Stomach (tissue), 19 donors: ENCODE measurements at regions of chr18 and their contacts with region 1.

Region 1: GRCh38 chr18:9153256-9153655 is 16.7 kb downstream of the ANKRD12 start:
- DNase-seq: no peak
- H3K4me3 ChIP-seq: no peak overlapping the region
- H3K27ac ChIP-seq: peak overlapping the region in 1 of 5 donors; percentile 4
- H3K4me1 ChIP-seq: peaks cover 19 to 76% (median 51%) of the 10 kb centered on the region in 4 donors
- H3K27me3 ChIP-seq: no peaks in the 10 kb centered on the region
- CTCF ChIP-seq: no peak
- EP300 ChIP-seq: no peak
- POLR2A ChIP-seq: no peak

Region 2: DNA sequence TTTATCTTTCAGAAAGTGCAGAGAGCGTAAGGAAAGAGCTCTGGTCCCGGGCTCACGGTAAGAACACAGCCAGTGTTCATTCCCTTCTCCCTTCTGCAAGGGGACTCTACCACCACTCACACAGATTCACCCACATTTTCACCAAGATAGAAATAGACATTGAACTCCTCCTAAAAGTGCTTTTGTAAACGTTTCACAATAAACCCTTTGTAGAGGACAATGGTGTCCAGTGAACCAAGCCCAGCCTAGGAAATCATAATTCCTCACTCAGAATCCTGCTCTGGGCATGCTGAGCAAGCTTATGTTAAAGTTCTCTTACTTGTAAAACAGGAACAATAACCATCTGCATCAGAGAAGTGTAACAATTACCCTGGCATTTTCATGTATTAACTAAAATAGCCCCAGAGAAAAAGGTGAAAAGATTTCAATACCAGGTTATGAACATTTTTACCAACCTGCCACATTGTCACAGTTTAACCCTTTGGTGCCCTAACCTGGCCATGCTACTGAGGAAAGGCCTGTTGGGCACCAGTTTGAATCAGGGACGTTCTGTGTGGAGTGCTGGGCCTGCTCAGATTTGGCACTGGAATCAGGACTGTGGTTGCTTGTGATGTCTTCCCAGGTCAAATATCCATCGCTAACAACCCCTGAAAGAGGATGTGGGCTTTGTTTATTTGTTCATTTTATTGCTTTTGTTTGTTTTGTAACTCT is 73.3 kb before region 1 on chr18:
- intact Hi-C with region 1: loop called (anchors 10 kb)
- DNase-seq: no peak
- H3K4me3 ChIP-seq: no peak overlapping the region
- H3K27ac ChIP-seq: peak overlapping the region in 1 of 5 donors; percentile 23
- H3K4me1 ChIP-seq: no peaks in the 10 kb centered on the region
- H3K27me3 ChIP-seq: no peaks in the 10 kb centered on the region
- CTCF ChIP-seq: no peak
- EP300 ChIP-seq: no peak
- POLR2A ChIP-seq: no peak